Endothelial cell of umbilical vein (primary cell): ENCODE measurements at regions of chr16 and their contacts with region 1.

Region 1: DNA sequence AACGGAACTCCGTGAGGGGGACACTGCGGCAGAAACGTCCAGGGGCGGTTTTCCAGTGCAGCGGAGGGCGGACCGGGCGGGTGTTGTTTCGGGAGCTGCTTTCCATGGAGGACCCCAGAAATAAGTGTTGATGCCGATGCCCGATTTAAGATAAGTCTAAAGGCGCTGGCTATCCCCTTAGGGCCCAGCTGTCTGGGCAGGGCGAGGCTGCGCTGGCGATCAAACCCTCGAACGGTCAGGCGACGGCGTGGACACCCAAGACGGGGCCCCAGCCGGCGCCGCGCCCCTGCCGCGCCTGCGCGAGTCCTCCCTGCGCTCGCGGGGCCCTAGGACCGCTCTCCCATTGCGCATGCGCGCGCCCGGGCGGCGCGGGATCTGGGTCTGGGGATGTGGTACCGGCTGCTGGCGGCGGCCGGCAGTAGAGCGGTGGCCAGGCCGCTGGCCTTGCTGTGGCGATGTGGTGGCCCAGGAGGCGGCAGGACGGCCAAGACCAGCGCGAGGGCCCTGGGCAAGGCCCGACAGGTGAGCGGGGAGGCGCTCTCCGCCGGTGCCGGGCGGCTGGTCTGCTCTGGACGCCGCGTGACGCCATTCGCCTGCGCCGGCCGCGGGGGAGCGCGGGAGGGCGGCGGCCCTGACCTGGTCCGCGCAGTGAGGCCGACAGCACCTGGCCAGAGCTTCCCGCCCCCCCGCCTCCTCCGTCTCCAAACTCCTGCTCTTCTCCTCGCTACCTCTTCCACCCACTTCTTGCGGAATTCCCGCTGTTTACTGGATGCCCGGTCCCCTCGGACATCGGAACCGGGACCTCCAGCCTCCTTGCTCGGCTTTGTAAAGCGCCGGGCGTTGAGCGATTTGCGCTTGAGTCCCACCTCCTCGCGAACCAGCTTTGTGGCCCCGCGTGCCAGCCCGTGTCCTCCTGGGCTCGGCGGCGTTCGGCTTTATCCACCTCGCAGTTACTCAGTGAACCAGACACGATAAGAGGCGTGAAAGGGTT is 24.0 kb downstream of the DEF8 start:
- DNase-seq: peak; percentile 93
- H3K4me3 ChIP-seq: peak overlapping the region; percentile 90 to 95 (median 91)
- H3K27ac ChIP-seq: peak overlapping the region; percentile 77
- H3K4me1 ChIP-seq: peaks cover 20% of the 10 kb centered on the region
- H3K27me3 ChIP-seq: no peaks in the 10 kb centered on the region
- CTCF ChIP-seq: no peak
- POLR2A ChIP-seq: peak; percentile 96

Region 2: GRCh38 chr16:90015558-90016339 is 43.2 kb after region 1 on chr16:
- CTCF ChIA-PET with region 1: interaction called, 4 read pairs
- POLR2A ChIA-PET with region 1: interaction called, 3 read pairs
- dilution Hi-C with region 1: no loop called
- intact Hi-C with region 1: loop called (anchors 2 kb)
- DNase-seq: peak; percentile 85
- H3K4me3 ChIP-seq: no peak overlapping the region
- H3K27ac ChIP-seq: peak overlapping the region; percentile 87
- H3K4me1 ChIP-seq: peaks cover 25% of the 10 kb centered on the region
- H3K27me3 ChIP-seq: no peaks in the 10 kb centered on the region
- CTCF ChIP-seq: no peak
- POLR2A ChIP-seq: peak; percentile 62

Region 3: GRCh38 chr16:90026135-90026534 is 53.6 kb after region 1 on chr16:
- CTCF ChIA-PET with region 1: no interaction called
- POLR2A ChIA-PET with region 1: no interaction called
- dilution Hi-C with region 1: no loop called
- intact Hi-C with region 1: no loop called
- DNase-seq: no peak
- H3K4me3 ChIP-seq: no peak overlapping the region
- H3K27ac ChIP-seq: no peak overlapping the region
- H3K4me1 ChIP-seq: peaks cover 8% of the 10 kb centered on the region
- H3K27me3 ChIP-seq: no peaks in the 10 kb centered on the region
- CTCF ChIP-seq: no peak
- POLR2A ChIP-seq: no peak